ENCODE measurements at regions of chr9 and their contacts with region 1.

Region 1: DNA sequence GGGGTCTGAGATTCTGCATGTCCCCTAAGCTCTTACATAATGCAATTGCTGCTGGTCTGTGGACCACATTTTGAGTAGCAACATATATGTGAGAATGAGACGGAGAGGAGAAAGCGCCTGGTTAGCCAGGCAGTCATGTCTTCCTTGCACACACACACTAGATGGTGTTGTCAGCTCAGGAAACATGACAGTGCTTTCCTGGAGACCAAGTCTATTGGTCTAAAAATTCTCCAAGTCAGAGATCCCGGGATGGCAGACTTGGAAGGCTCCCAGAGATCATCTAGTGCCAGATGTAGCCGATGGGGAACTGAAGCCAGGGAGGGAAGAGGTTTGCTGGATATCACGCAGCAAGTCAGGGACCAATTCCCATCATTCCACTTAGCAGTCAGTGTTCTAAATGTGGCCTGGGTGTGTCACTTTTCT is 53.4 kb downstream of the GALNT12 start:
- DNase-seq: peak; percentile 89

Region 2: GRCh38 chr9:98899408-98900056 is 38.6 kb after region 1 on chr9:
- intact Hi-C with region 1: loop called (anchors 5 kb)
- DNase-seq: no peak

Region 3: GRCh38 chr9:98974994-98975712 is 114.3 kb after region 1 on chr9:
- intact Hi-C with region 1: loop called (anchors 2 kb)
- DNase-seq: peak; percentile 95

Region 4: GRCh38 chr9:99140685-99141314 is 279.9 kb after region 1 on chr9:
- intact Hi-C with region 1: loop called (anchors 1 kb)
- DNase-seq: no peak

Region 5: DNA sequence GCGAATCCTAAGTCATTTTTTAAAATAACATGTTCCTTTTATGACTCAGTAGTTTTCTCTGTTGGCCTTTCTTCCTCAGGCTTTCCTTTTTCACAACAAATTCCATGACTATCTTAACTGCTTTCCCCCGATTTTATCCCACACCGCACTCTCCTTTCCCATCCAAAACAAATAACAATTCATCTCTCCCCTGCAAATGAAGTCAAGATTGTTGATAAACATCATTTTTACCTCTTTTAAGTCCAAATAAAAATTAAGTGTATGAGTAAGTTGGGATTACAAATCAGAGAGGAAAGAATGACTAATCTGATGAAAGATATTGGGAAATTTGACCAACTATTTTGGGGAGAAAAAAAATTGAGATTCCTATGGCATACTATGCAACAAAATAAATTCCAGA is 408.5 kb after region 1 on chr9:
- intact Hi-C with region 1: no loop called
- DNase-seq: no peak

Measured in cardiac septum (tissue), 1 donor.